A549 (cell line): ENCODE measurements at regions of chr12 and their contacts with region 1.

Region 1: DNA sequence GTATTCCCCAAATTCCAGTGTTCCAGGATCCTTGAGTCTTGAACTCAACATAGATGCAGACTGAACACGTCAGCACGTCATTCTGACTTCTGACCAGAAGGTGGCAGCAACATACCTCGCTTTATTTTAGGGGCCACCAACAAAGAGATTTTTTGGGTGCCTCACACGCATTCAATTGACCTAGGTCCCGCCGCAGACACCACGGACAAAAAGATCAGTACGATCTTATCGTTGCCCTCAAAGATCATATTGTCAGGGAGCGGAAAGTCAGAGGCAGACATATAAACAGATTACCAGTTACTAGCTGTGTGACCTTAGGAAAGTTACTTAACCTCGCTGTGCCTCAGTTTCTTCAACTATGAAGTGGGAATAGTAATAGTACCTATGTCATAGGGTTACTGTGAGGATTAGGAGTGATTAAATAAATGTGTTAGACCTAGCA is 6.5 kb upstream of the PRPH start:
- DNase-seq: peak; percentile 66 to 70
- ATAC-seq: peak; percentile 47 to 66; a peak in 4 of 6 replicates
- H3K4me3 ChIP-seq: no peak overlapping the region
- H3K27ac ChIP-seq: no peak overlapping the region
- H3K4me1 ChIP-seq: 0 out of 3 replicates have a peak, but pooled peaks cover 12% of the 10 kb centered on the region
- CTCF ChIP-seq: peak; percentile 96
- EP300 ChIP-seq: no peak
- POLR2A ChIP-seq: no peak
- RAD21 ChIP-seq: peak; percentile 89 to 91

Region 2: GRCh38 chr12:49264738-49265515 is 23.5 kb before region 1 on chr12 and contains the start of gene TUBA1C:
- CTCF ChIA-PET with region 1: interaction called, 164 read pairs
- POLR2A ChIA-PET with region 1: interaction called, 6 read pairs
- DNase-seq: peak; percentile 91 to 97
- ATAC-seq: peak; percentile 80 to 83
- H3K4me3 ChIP-seq: peak within 1 kb of the TSS; percentile 71
- H3K27ac ChIP-seq: peak within 1 kb of the TSS; percentile 94 to 100
- H3K4me1 ChIP-seq: peaks cover 36% of the 10 kb centered on the region
- CTCF ChIP-seq: no peak
- EP300 ChIP-seq: no peak
- POLR2A ChIP-seq: peak; percentile 99
- RAD21 ChIP-seq: no peak
- polyA plus RNA-seq, gene TUBA1C: 1,183 and 1,488 TPM in 2 replicates

Region 3: DNA sequence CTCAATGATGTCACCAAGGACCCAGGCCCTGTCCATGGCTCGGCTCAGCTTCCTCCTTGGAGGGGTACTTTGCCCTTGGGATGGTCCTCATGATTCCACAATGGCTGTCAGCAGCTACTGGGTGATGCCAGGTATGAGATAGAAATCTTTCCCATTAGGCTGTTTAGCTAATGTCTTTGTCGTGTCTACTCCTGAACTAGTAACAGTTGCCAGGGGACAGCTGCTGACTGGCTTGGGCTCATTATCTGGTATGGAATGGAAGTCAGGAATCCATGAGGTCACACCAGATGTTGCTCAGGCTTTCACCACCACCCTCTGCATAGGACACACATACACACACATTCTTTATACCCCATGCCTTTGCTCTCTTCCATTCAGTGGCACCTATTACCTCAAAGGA is 15.7 kb after region 1 on chr12:
- CTCF ChIA-PET with region 1: interaction called, 120 read pairs
- POLR2A ChIA-PET with region 1: no interaction called
- DNase-seq: no peak
- ATAC-seq: peak in 1 of 2 experiments; percentile 37; a peak in 2 of 6 replicates
- H3K4me3 ChIP-seq: no peak overlapping the region
- H3K27ac ChIP-seq: no peak overlapping the region
- H3K4me1 ChIP-seq: no peaks in the 10 kb centered on the region
- CTCF ChIP-seq: no peak
- EP300 ChIP-seq: no peak
- POLR2A ChIP-seq: no peak
- RAD21 ChIP-seq: no peak

Region 4: GRCh38 chr12:49322708-49323523 is 34.5 kb after region 1 on chr12 and contains the start of gene TROAP:
- CTCF ChIA-PET with region 1: interaction called, 61 read pairs
- POLR2A ChIA-PET with region 1: no interaction called
- DNase-seq: peak; percentile 98 to 99
- ATAC-seq: peak; percentile 99 to 100
- H3K4me3 ChIP-seq: peak within 1 kb of the TSS; percentile 62
- H3K27ac ChIP-seq: peak within 1 kb of the TSS; percentile 80 to 91
- H3K4me1 ChIP-seq: peaks cover 12% of the 10 kb centered on the region; the same call in 2 of the 3 replicates
- CTCF ChIP-seq: no peak
- EP300 ChIP-seq: no peak
- POLR2A ChIP-seq: peak; percentile 94
- RAD21 ChIP-seq: no peak
- polyA plus RNA-seq, gene TROAP: 50.0 and 56.4 TPM in 2 replicates

Region 5: DNA sequence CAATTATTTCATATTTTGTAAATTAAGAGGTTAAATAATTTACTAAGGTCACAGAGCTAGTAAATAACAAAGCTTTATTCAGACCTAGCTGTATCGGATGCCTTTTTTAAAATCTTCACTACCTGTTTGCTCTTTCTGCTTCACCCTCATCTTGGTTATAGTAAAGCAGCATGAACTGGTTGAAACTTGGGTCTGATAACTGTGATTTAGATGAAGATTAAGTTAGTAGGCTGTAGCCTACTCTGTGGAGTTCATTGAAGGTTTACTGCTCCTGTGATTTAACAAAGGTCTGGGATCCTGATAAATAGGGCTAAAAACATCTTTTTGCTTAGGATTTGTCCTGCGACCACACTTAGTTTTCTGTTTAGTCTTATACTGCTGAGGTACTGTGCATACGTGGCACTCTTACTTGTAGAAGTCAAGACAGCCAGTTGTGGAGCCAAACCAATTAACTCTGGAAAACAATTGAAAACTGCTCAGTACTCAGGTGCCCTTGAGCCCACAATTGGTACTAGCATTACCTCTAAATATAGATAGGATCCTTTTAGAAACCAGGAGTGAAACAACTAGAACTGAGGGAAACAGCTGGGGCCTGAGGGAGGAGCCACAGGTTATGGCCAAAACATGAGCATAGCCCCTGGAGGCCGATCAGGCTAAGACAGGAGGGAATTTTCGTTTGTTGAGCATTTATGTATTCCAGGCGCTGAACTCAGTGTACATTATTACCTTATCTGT is 81.1 kb after region 1 on chr12:
- CTCF ChIA-PET with region 1: no interaction called
- POLR2A ChIA-PET with region 1: no interaction called
- DNase-seq: peak; percentile 74 to 76
- ATAC-seq: peak; percentile 45 to 57; a peak in 4 of 6 replicates
- H3K4me3 ChIP-seq: peak overlapping the region; percentile 86
- H3K27ac ChIP-seq: peak overlapping the region; percentile 95 to 96; a peak in 5 of 6 replicates
- H3K4me1 ChIP-seq: peaks cover 36% of the 10 kb centered on the region
- CTCF ChIP-seq: peak; percentile 16; the same call in 1 of the 3 replicates
- EP300 ChIP-seq: no peak
- POLR2A ChIP-seq: no peak
- RAD21 ChIP-seq: no peak

Region 6: GRCh38 chr12:49580572-49581535 is 292.4 kb after region 1 on chr12:
- CTCF ChIA-PET with region 1: interaction called, 16 read pairs
- POLR2A ChIA-PET with region 1: no interaction called
- DNase-seq: peak; percentile 83 to 86
- ATAC-seq: peak; percentile 95 to 98
- H3K4me3 ChIP-seq: no peak overlapping the region
- H3K27ac ChIP-seq: 0 out of 6 replicates have a peak overlapping the region, but pooled peaks of 1 of the 2 experiments have one; percentile 22
- H3K4me1 ChIP-seq: peaks cover 16% of the 10 kb centered on the region; the same call in 2 of the 3 replicates
- CTCF ChIP-seq: peak; percentile 81
- EP300 ChIP-seq: no peak
- POLR2A ChIP-seq: no peak
- RAD21 ChIP-seq: peak; percentile 83 to 90